A673 (cell line): ENCODE measurements at regions of chr6 and their contacts with region 1.

Region 1: DNA sequence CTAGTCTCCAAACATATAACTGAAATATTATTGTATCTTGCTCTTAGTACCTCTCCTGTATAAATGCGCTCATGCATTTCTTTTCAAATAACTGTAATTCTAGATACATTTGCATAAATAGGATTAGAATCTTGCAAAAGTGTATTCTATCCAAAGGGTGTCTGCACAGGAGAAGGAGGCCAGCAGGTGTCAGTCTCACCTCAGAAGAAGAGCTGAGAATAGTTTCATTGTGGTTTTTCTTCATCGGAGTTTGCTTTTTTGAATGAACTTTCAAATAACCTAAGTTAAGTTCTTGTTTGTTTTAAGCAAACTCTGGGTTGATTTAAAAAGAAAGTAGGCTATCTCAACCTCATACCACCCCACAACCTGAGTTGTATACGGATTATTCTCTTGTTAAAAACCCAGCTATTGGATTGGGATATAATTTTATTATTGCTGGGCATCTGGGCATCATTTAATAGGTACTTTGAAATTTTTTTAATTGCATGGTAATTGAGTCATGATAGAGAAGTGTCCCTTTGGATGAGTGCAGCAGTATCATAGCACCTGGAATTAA is 125.0 kb upstream of the MLIP start:
- DNase-seq: peak; percentile 84
- H3K4me3 ChIP-seq: no peak overlapping the region
- H3K27ac ChIP-seq: no peak overlapping the region
- H3K4me1 ChIP-seq: peaks cover 29% of the 10 kb centered on the region
- H3K27me3 ChIP-seq: no peaks in the 10 kb centered on the region
- CTCF ChIP-seq: peak; percentile 93

Region 2: DNA sequence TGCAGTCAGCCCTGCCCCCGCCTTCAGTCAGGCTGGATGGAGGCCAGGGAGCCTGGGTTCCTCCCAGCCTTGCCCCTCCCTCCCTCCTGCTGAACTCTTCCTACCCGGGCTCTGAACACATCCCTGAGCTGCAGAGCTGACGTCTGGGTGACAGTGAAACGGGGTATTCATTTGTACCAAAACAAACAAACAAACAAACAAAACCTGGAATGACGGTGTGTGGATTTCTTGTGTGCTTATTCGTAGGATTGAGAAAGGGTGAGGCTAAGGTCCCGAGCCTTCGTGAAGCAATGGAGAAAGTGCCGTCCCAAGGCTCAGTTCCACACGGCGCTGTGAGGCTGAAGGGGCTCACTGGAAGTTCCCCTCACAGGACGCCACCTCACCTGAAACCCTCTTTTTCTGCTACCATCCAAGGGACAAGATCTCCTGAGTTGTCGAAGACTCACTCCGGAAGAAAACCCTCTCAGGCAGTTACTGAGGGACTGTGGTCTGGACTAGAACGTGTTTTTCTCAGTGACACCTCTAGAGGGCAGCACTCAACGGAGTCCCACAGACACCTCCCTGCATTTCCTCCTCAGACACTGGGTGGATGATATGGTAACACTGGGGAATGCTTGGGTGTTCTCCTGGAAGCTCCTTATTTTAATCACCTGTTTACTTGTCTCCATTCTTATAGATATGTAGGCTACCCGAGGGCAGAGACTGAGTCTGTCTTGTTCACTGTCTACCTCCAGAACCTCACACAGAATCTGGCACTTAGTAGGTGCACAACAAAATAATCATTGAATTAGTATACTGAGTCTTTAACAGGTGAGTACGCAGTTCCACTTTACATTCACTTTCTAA is 1104.0 kb before region 1 on chr6:
- CTCF ChIA-PET with region 1: no interaction called
- POLR2A ChIA-PET with region 1: no interaction called
- intact Hi-C with region 1: no loop called
- DNase-seq: peak; percentile 84
- H3K4me3 ChIP-seq: peak overlapping the region; percentile 46
- H3K27ac ChIP-seq: no peak overlapping the region
- H3K4me1 ChIP-seq: no peaks in the 10 kb centered on the region
- H3K27me3 ChIP-seq: no peaks in the 10 kb centered on the region
- CTCF ChIP-seq: peak; percentile 92

Region 3: GRCh38 chr6:54071821-54072340 is 85.6 kb after region 1 on chr6:
- CTCF ChIA-PET with region 1: no interaction called
- POLR2A ChIA-PET with region 1: no interaction called
- intact Hi-C with region 1: loop called (anchors 2 kb)
- DNase-seq: peak; percentile 33
- H3K4me3 ChIP-seq: no peak overlapping the region
- H3K27ac ChIP-seq: peak overlapping the region; percentile 21
- H3K4me1 ChIP-seq: peaks cover 54% of the 10 kb centered on the region
- H3K27me3 ChIP-seq: no peaks in the 10 kb centered on the region
- CTCF ChIP-seq: no peak

Region 4: GRCh38 chr6:54267798-54268197 is 281.6 kb after region 1 on chr6:
- CTCF ChIA-PET with region 1: interaction called, 5 read pairs
- POLR2A ChIA-PET with region 1: no interaction called
- intact Hi-C with region 1: loop called (anchors 2 kb)
- DNase-seq: peak; percentile 78
- H3K4me3 ChIP-seq: no peak overlapping the region
- H3K27ac ChIP-seq: no peak overlapping the region
- H3K4me1 ChIP-seq: peaks cover 6% of the 10 kb centered on the region
- H3K27me3 ChIP-seq: peaks cover 3% of the 10 kb centered on the region
- CTCF ChIP-seq: peak; percentile 68

Region 5: GRCh38 chr6:54697424-54697823 is 711.2 kb after region 1 on chr6:
- CTCF ChIA-PET with region 1: no interaction called
- POLR2A ChIA-PET with region 1: no interaction called
- intact Hi-C with region 1: loop called (anchors 10 kb)
- DNase-seq: peak; percentile 46
- H3K4me3 ChIP-seq: no peak overlapping the region
- H3K27ac ChIP-seq: no peak overlapping the region
- H3K4me1 ChIP-seq: no peaks in the 10 kb centered on the region
- H3K27me3 ChIP-seq: no peaks in the 10 kb centered on the region
- CTCF ChIP-seq: peak; percentile 47

Region 6: DNA sequence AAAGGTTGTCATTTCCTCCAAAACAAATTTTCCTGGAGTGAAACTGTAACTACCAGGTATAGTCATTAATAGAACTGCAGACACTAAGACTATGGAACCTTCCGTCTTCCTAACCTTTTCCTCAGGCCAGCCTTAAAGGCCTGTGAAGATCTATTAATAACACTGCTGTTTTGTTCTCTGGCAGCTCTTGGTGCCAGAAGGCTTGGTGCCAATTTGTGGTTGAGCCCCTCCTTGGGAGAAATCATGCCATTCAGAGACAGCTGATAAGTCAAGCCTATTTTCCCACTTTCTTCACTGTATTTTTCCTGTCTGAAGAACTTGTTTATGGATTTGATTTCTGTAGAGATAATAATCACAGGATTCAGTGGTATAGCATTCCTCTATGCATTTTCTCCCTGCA is 1252.9 kb after region 1 on chr6:
- CTCF ChIA-PET with region 1: no interaction called
- POLR2A ChIA-PET with region 1: no interaction called
- intact Hi-C with region 1: loop called (anchors 5 kb)
- DNase-seq: peak; percentile 23
- H3K4me3 ChIP-seq: no peak overlapping the region
- H3K27ac ChIP-seq: no peak overlapping the region
- H3K4me1 ChIP-seq: no peaks in the 10 kb centered on the region
- H3K27me3 ChIP-seq: no peaks in the 10 kb centered on the region
- CTCF ChIP-seq: no peak